Activated naive CD4-positive, alpha-beta T cell treated with anti-CD3 and anti-CD28 coated beads for 36 hours (primary cell): ENCODE measurements at regions of chr6 and their contacts with region 1.

Region 1: DNA sequence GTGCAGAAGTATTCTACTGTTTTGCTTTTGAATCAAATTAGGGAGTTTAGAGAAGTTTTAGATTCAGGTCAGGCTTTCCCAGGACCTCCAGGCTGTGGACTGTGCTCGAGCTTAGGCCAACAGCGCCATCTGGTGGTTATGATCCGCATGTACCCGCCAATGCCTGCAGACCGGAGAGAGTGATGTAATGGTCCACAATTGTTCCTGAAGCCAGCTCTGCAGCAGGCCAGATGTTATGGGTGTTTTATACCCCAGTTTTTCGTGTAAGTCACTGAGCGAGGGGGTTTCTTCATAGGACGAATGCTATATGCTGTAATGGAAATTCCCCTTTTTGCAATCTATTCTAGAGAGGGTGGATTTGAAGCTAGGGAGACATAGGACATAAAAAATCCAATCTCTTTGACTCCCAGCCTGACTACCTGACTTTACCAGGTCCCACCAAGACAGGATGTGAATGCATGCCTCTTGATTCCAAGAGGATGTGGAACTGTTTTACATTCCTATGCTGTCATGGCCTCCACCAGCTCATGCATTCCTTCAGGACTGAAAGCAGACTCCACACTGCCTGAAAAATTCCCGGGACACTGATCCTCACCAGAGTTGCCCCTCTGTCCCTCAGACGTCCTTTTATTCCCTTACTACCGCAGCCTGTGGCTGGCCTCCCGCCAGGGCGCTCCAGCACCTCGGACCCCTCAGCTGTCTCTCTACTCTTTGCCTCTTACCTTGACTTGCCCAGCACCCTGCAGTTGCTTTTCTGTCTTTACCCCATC is 41.2 kb upstream of the LY86 start:
- DNase-seq: peak; percentile 91
- H3K4me3 Mint-ChIP-seq: peak overlapping the region; percentile 64
- H3K27ac Mint-ChIP-seq: no peak overlapping the region
- H3K4me1 Mint-ChIP-seq: peaks cover 6% of the 10 kb centered on the region
- H3K27me3 Mint-ChIP-seq: peaks cover 32% of the 10 kb centered on the region

Region 2: DNA sequence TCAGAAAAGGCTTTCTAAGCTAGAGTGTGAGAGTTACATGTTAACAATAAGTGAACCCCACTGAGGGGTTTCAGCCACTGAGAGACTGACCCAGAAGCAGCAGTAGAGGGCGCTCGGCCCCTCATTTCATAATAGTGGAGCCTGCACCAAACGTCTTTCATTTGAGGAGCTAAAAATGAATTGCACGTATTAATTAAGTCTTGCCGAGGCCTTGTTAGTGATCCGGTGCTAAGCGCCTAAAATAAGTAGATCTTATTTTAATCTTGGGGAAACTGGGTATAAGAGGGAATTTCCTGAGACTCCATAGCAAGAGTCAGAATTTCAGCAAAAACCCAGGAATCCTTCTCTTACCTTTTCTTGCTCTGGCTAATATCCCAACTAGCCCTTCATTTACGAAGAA is 1076.3 kb before region 1 on chr6:
- CTCF ChIA-PET with region 1: no interaction called
- intact Hi-C with region 1: loop called (anchors 1 kb)
- DNase-seq: peak; percentile 79
- H3K4me3 Mint-ChIP-seq: no peak overlapping the region
- H3K27ac Mint-ChIP-seq: no peak overlapping the region
- H3K4me1 Mint-ChIP-seq: peaks cover 11% of the 10 kb centered on the region
- H3K27me3 Mint-ChIP-seq: no peaks in the 10 kb centered on the region

Region 3: DNA sequence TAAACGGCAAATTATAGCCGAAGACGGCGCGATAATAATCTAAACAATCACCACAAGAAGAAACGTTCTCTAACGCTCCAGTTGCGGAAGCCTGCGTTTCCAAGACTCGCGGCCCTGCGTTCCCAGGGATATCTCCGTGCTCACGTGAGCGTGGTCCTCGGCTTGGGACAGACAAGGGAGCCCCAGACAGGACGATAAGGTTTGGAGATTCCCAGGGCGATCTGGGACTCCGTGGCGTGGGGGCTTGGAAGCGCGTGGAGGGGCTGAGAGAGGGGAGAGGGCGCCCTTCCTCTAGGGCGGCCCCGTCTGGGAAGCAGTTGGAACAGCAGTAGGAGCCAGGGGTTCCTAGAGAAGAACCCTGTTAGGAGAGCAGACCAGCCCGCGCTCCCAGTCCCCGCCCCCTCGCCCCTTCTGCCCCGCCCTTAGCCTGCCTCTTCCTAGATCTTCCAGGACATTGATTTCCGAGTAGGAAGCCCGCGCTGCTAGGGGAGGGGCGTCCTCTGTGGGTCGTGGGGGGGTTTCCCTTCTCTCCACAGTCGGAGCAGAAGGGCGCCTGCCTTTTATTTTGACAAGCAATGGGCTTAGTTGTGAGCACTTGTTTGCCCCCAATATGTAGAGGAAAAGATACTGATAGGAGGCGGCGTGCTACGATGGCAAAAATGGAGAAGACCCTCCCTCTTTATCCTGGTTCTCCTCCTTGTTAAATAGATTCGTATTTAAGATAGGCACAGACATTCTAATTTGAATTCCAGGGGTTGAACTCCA is 551.2 kb before region 1 on chr6:
- CTCF ChIA-PET with region 1: no interaction called
- intact Hi-C with region 1: loop called (anchors 5 kb)
- DNase-seq: peak; percentile 14
- H3K4me3 Mint-ChIP-seq: peak overlapping the region; percentile 77
- H3K27ac Mint-ChIP-seq: no peak overlapping the region
- H3K4me1 Mint-ChIP-seq: peaks cover 50% of the 10 kb centered on the region
- H3K27me3 Mint-ChIP-seq: peaks cover 80% of the 10 kb centered on the region

Region 4: DNA sequence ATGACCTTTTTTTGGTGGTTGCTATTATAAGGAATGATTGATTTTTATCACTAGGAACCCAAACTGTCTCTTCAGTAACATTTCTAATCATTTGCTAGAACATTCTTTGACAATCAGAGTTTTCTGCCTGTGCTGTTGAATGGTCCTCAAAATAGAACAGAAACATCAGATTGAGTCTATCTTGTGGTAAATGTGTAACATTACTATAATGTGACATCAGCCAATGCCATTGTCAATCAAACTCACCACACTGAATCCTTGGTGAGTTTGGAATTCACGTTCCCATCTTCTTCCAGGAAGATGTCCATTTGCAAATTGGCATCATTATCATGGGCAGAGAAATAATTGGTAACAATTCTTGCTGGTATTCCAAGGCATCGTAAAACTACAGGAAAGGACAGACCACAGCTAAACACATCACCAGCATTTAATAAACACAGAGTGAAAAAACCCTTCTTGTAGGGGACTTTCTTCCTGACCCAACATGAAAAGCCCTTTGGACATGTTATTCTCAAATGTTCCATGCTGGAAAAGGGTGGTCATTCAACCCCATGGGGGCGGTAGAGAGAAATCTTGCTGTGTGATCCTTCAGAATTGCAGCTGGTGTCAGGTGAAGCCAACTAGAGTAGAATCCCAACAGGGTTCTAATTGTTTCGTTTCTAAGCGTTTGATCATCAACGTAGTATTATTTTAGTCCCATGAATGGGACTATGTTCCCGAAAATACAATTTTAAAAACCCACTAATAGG is 325.3 kb before region 1 on chr6:
- CTCF ChIA-PET with region 1: no interaction called
- intact Hi-C with region 1: loop called (anchors 1 kb)
- DNase-seq: peak; percentile 14
- H3K4me3 Mint-ChIP-seq: no peak overlapping the region
- H3K27ac Mint-ChIP-seq: no peak overlapping the region
- H3K4me1 Mint-ChIP-seq: no peaks in the 10 kb centered on the region
- H3K27me3 Mint-ChIP-seq: peaks cover 25% of the 10 kb centered on the region

Region 5: DNA sequence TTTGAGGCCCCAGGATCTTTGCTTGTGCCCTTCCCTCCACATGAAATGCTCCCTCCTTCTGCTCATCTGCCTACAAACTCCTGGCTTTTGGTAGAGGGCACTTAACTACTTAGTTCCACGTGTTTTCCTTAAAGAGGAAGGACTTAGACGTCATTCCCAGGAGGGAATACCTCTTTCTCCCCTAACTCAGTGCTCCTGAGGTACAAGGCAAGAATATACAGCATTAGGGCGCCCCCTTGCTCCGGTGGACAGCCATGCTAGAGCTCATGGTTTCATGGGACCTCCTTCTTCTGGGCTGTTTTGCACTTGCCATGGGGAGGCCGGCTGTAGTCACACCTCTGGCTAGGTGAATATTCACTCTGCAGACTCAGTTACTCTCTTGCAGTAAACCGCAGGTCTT is 52.6 kb before region 1 on chr6:
- CTCF ChIA-PET with region 1: no interaction called
- intact Hi-C with region 1: loop called (anchors 2 kb)
- DNase-seq: peak; percentile 74
- H3K4me3 Mint-ChIP-seq: no peak overlapping the region
- H3K27ac Mint-ChIP-seq: no peak overlapping the region
- H3K4me1 Mint-ChIP-seq: no peaks in the 10 kb centered on the region
- H3K27me3 Mint-ChIP-seq: no peaks in the 10 kb centered on the region